Mammary epithelial cell (primary cell): ENCODE measurements at regions of chr4 and their contacts with region 1.

Region 1: DNA sequence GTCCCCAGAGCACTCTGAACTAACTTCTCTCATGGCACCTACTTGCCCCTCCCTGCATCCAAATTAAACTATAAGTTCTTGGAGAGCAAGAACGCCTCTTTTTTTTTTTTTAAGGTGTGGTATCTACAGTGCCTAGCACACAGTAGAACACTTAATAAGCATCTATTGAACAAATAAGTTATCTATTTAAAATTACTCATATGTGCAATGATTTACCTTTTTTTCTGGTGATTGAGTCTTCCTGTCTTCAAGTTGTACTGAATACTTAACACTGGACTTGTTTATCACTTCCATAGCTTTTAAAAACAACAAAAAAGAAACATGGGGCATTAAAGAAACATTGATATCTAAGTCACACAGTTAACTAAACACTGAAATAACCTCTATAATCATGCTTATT is 29.1 kb downstream of the HAUS3 start:
- DNase-seq: no peak
- H3K4me3 ChIP-seq: no peak overlapping the region
- H3K27ac ChIP-seq: no peak overlapping the region
- H3K4me1 ChIP-seq: peaks cover 8% of the 10 kb centered on the region
- H3K27me3 ChIP-seq: peaks cover 20% of the 10 kb centered on the region
- CTCF ChIP-seq: no peak

Region 2: GRCh38 chr4:2168469-2169319 is 44.1 kb before region 1 on chr4:
- CTCF ChIA-PET with region 1: no interaction called
- dilution Hi-C with region 1: loop called (anchors 5 kb)
- in situ Hi-C with region 1: no loop called
- intact Hi-C with region 1: no loop called
- DNase-seq: peak; percentile 17
- H3K4me3 ChIP-seq: no peak overlapping the region
- H3K27ac ChIP-seq: no peak overlapping the region
- H3K4me1 ChIP-seq: no peaks in the 10 kb centered on the region
- H3K27me3 ChIP-seq: no peaks in the 10 kb centered on the region
- CTCF ChIP-seq: peak; percentile 6 to 48